Endothelial cell of umbilical vein (primary cell): ENCODE measurements at regions of chr4 and their contacts with region 1.

Region 1: GRCh38 chr4:145930592-145930991 is 8.0 kb downstream of the ZNF827 start:
- DNase-seq: no peak
- H3K4me3 ChIP-seq: no peak overlapping the region
- H3K27ac ChIP-seq: no peak overlapping the region
- H3K4me1 ChIP-seq: peaks cover 5% of the 10 kb centered on the region
- H3K27me3 ChIP-seq: no peaks in the 10 kb centered on the region
- CTCF ChIP-seq: no peak
- POLR2A ChIP-seq: no peak

Region 2: DNA sequence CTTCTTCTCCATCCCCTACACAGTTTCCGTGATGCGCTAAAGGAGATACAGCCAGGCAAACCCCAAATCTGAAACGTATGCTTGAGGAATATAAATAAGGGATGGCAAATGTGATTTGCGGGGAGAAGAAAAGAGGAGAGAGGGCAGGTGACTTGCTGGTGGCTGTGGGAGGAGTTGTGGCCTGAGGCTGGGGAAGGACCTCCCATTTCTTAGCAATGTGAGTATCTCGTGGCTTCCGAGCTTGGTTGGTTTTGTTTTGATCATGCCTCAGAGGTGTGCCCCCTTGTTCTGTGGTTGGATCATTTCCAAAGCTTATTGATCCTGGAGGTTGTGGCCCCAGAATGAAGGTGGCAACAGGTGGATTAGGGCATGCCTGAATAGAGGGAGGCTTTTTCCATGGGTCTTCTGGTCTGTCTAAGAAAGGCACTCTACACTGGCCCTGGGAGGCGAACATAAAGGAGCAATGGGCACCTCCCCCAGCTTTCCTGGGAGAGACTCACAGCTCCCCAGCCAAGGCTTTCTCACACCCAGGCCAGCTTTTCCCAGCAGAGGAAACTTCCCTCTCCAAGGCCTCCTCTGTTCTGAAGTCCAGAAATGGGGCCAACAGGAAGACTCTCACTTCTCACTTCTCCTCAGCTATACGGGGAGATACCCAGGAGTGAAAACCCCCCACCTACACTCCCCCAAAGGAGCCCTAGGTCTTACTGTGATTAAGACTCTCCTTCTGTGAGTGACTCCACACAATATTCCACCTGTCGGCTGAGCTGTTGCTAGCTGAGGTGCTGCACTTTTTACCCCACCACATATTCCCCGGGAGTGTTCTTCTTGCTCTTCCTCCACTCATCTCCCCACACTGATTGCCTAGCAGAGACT is 210.6 kb before region 1 on chr4:
- CTCF ChIA-PET with region 1: no interaction called
- POLR2A ChIA-PET with region 1: no interaction called
- dilution Hi-C with region 1: no loop called
- intact Hi-C with region 1: no loop called
- DNase-seq: no peak
- H3K4me3 ChIP-seq: no peak overlapping the region
- H3K27ac ChIP-seq: no peak overlapping the region
- H3K4me1 ChIP-seq: no peaks in the 10 kb centered on the region
- H3K27me3 ChIP-seq: peaks cover 16 to 17% of the 10 kb centered on the region in 2 experiments
- CTCF ChIP-seq: no peak
- POLR2A ChIP-seq: no peak

Region 3: GRCh38 chr4:145920205-145920604 is 10.4 kb before region 1 on chr4:
- CTCF ChIA-PET with region 1: interaction called, 16 read pairs
- POLR2A ChIA-PET with region 1: no interaction called
- dilution Hi-C with region 1: no loop called
- intact Hi-C with region 1: no loop called
- DNase-seq: peak; percentile 65
- H3K4me3 ChIP-seq: no peak overlapping the region
- H3K27ac ChIP-seq: no peak overlapping the region
- H3K4me1 ChIP-seq: peaks cover 3% of the 10 kb centered on the region
- H3K27me3 ChIP-seq: no peaks in the 10 kb centered on the region
- CTCF ChIP-seq: no peak
- POLR2A ChIP-seq: no peak